Upper lobe of right lung (tissue), 1 donor: ENCODE measurements at regions of chr17 and their contacts with region 1.

Region 1: DNA sequence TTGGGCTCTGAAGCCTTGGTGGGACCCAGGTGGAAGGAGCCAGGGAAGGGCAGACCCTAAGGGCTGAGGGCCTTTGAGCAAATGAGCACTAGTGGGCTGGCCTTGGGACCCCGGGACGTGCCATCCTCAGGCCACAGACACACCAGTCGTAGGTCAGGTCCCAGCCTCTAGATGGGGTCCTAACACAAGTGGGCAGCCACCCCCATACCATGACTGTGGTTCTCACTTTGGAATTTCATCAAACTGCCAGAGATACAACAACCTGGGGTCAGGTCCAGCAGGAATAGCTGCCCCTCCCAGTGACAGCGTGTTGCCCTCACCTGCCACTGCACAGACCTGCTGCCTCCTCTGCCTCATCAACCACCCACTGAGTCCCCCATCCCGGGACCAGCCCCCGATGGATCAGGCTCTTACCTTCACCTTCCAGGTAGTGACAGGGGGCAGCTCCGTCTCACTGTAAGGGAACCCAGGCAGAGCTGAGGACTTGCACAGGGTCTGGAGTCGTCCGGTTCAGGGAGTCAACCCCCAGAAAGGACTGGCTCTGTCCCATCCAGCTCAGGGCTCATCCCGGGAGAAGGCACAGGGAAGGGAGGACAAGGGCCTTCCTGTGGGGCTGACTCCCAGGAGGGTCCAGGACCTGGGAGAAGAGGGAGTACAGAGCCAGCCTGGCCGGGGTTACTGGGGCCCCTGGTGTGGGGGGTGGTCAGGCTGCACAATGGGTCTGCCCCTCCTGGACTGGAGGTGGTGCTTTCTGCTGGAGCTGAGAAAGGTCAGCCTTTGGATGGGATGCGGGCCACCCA is 40.0 kb downstream of the LGALS9 start:
- DNase-seq: peak; percentile 52
- ATAC-seq: no peak
- H3K4me3 ChIP-seq: no peak overlapping the region
- H3K27ac ChIP-seq: no peak overlapping the region
- H3K4me1 ChIP-seq: no peaks in the 10 kb centered on the region
- H3K27me3 ChIP-seq: no peaks in the 10 kb centered on the region
- CTCF ChIP-seq: no peak

Region 2: GRCh38 chr17:27256225-27257030 is 414.6 kb before region 1 on chr17:
- intact Hi-C with region 1: no loop called
- DNase-seq: no peak
- ATAC-seq: peak; percentile 96
- H3K4me3 ChIP-seq: no peak overlapping the region
- H3K27ac ChIP-seq: peak overlapping the region; percentile 80
- H3K4me1 ChIP-seq: peaks cover 21% of the 10 kb centered on the region
- H3K27me3 ChIP-seq: no peaks in the 10 kb centered on the region
- CTCF ChIP-seq: no peak

Region 3: DNA sequence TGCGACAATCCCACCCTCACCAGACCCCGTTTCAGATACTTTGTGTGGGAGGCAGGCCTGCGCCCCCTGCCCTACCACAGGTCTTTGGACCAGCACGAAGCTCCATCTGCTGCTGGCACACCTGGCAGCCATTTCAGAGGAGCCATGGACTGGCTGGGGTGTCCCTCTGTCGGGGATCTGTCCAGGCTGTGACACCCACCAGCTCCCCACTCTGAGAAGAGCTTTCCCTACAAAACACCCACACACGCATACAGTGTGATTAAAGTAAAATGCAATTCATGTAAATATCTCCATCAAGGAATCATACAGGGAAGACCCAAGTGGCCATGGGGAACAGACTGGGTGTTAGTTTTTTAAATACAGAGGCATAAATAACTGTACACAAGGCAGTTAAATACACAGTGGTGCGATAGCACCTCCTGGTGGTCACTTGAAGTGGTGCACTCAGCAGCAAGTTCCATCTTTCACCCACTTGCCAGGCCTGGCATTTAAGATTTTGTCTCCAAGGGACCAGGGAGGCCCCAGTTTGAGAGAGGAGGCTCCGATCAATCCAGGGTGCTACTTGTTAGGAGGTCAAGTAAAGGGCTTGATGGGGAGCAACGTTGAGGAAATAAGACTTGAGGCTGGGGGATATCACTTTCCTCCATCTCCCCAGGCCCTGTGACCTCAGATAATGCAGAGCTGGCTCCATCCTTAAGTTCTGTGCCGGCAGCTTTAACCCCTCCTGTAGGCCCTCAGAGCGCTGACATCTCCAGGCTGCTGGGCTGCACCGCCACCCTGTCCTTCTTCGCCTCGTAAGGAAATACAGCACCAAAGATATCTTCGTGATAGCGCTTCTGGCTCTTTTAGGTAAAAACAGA is 85.8 kb after region 1 on chr17:
- intact Hi-C with region 1: loop called (anchors 10 kb)
- DNase-seq: peak; percentile 65
- ATAC-seq: peak; percentile 61
- H3K4me3 ChIP-seq: no peak overlapping the region
- H3K27ac ChIP-seq: no peak overlapping the region
- H3K4me1 ChIP-seq: no peaks in the 10 kb centered on the region
- H3K27me3 ChIP-seq: no peaks in the 10 kb centered on the region
- CTCF ChIP-seq: peak; percentile 95